ENCODE measurements at regions of chr9 and their contacts with region 1.

Region 1: DNA sequence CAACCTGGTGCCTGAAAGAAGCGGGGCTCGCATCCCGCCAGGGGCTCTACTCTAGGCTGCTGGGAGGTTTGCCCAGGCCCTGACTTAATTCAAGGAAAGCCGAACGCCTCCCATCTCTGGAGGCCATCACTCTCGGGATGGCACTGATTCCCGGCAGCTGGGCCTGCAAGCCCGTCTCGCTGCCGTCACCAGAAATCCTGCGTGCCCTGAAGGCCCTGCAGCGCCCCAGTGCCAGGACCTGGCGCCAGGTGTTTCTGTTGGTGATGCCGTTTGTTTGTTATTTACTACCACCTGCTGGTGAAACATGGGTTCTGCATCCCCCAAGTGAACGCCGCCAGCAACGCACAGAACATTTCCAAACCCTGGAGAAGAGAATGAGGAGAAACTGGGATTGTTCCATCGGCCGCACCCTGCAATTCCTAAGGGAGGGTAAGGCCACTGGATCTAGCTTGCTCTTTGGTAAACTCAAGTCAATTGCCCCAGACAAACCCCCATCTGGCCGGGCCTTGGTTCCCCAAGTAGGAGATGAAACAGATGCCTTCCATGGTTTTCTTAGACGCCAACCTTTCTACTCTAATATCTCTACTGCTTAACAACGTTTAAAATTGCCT is 77.9 kb downstream of the AK8 start:
- DNase-seq: peak; percentile 85
- H3K4me3 ChIP-seq: peak overlapping the region in 1 of 2 experiments; percentile 28; a peak in 1 of 4 replicates
- H3K27ac ChIP-seq: peak overlapping the region in 1 of 2 experiments; percentile 66; a peak in 2 of 4 replicates
- H3K4me1 ChIP-seq: peaks cover 0 to 31% of the 10 kb centered on the region in 2 experiments; a peak in 2 of 4 replicates
- H3K27me3 ChIP-seq: no peaks in the 10 kb centered on the region; the same call in 1 of the 2 replicates
- CTCF ChIP-seq: peak; percentile 81
- EP300 ChIP-seq: peak in 1 of 2 experiments; percentile 70; a peak in 2 of 4 replicates
- RAD21 ChIP-seq: peak; percentile 97

Region 2: DNA sequence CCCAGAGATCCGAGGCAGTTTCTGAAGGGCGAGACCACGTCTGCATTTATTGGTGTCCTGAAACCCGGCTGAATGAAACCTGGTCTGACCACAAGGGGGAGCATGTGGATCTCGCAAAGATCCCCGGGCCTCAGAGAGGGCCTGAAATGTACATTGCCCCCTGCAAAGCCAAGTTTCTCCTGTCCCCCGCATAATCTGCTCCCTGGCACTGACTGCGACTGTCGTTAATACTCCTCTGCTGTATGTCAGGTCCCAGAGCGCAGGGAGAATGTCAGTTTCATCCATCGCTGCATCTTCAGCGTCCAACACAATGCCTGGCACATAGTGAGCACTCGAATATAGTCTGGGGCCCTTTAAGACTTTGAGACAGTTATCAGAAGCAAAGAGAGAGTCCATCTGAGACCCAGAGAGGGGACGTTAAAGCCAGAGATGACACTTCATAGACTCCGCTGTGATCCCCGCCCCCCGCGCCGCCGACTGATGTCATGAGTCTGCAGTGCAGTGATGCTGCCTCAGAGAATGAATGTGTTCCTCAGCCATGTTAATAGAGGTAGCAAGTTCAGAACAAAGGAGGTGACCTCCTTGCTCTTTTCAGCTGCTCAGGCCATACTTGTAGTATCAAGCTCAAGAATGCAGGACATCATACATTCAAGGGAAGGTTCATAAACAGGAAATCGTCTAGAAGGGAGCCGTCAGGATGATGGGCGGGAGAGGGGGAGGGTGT is 292.2 kb before region 1 on chr9:
- CTCF ChIA-PET with region 1: interaction called, 11 read pairs
- POLR2A ChIA-PET with region 1: no interaction called
- DNase-seq: peak; percentile 92
- H3K4me3 ChIP-seq: no peak overlapping the region; a peak in 2 of 4 replicates
- H3K27ac ChIP-seq: peak overlapping the region in 1 of 2 experiments; percentile 97; a peak in 2 of 4 replicates
- H3K4me1 ChIP-seq: peaks cover 0 to 56% of the 10 kb centered on the region in 2 experiments; a peak in 2 of 4 replicates
- H3K27me3 ChIP-seq: no peaks in the 10 kb centered on the region
- CTCF ChIP-seq: peak; percentile 84
- EP300 ChIP-seq: no peak
- RAD21 ChIP-seq: peak; percentile 90

Region 3: GRCh38 chr9:132584601-132585560 is 215.3 kb before region 1 on chr9:
- CTCF ChIA-PET with region 1: interaction called, 15 read pairs
- POLR2A ChIA-PET with region 1: no interaction called
- DNase-seq: no peak
- H3K4me3 ChIP-seq: no peak overlapping the region
- H3K27ac ChIP-seq: no peak overlapping the region
- H3K4me1 ChIP-seq: peaks cover 8% of the 10 kb centered on the region in 2 experiments; a peak in 1 of 4 replicates
- H3K27me3 ChIP-seq: peaks cover 88% of the 10 kb centered on the region
- CTCF ChIP-seq: no peak
- EP300 ChIP-seq: no peak
- RAD21 ChIP-seq: no peak

Region 4: DNA sequence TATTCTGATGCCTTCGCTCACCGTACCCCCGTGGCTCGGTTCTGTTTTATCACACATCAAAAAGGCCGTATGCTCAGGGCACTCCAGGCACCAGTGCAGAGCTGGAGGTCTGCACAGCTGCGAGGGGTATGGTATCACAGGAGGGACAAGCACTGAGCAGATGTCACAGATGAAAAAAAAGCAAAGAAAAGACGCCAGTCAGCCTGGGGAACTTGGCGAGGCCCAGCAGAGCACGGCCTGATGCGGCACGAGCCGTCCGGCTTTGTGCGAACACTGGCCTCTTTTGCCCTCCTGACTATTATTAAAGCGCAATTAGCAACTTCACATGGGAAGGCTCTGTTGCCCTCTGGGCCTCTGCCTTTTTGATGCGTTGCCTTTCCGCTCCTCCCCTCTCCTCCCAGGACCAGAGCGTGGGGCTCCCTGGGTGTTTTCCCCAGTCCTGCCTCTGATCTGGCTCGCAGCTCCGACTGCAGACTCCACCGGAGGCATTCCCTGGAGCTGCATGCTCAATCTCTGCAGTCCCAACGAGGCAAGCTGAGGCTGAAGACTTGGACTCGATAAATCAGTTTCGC is 33.5 kb after region 1 on chr9:
- CTCF ChIA-PET with region 1: interaction called, 10 read pairs
- POLR2A ChIA-PET with region 1: no interaction called
- DNase-seq: peak; percentile 81
- H3K4me3 ChIP-seq: no peak overlapping the region
- H3K27ac ChIP-seq: peak overlapping the region in 1 of 2 experiments; percentile 72; a peak in 2 of 4 replicates
- H3K4me1 ChIP-seq: peaks cover 0 to 19% of the 10 kb centered on the region in 2 experiments; a peak in 1 of 4 replicates
- H3K27me3 ChIP-seq: no peaks in the 10 kb centered on the region
- CTCF ChIP-seq: no peak
- EP300 ChIP-seq: peak in 1 of 2 experiments; percentile 40; a peak in 2 of 4 replicates
- RAD21 ChIP-seq: no peak